ENCODE measurements at regions of chr3 and their contacts with region 1.

Region 1: DNA sequence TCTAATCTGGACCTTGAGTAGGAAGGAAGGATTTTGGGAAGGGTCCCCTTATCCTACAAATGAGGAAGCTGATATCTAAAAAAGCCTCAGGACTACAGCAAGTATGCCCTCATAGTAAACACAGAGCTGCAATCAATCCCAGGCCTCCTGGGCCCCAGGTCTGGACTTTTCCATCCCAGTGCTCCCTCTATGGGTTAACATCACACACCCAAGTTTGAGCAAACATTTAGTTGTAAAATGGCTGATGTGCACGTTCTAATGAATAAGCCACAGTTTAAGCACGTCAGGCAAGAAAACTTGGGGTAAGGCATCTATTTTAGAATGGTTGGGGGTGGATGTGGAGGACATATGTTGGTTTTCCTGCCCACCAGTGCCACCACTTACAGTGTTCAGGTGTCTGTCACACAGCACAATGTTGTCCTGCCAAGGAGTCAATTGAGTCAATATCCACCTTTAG is 44.3 kb upstream of the UBE2E1 start:
- DNase-seq: peak; percentile 56 to 63
- H3K4me3 ChIP-seq: no peak overlapping the region
- H3K4me3 Mint-ChIP-seq: no peak overlapping the region
- H3K27ac Mint-ChIP-seq: no peak overlapping the region
- H3K4me1 ChIP-seq: no peaks in the 10 kb centered on the region
- H3K4me1 Mint-ChIP-seq: no peaks in the 10 kb centered on the region
- H3K27me3 ChIP-seq: no peaks in the 10 kb centered on the region
- H3K27me3 Mint-ChIP-seq: no peaks in the 10 kb centered on the region
- CTCF ChIP-seq: peak in 1 of 2 experiments; percentile 55

Region 2: GRCh38 chr3:23519314-23520208 is 241.9 kb before region 1 on chr3:
- CTCF ChIA-PET with region 1: no interaction called
- POLR2A ChIA-PET with region 1: no interaction called
- intact Hi-C with region 1: loop called (anchors 10 kb)
- DNase-seq: no peak
- H3K4me3 ChIP-seq: no peak overlapping the region
- H3K4me3 Mint-ChIP-seq: no peak overlapping the region
- H3K27ac Mint-ChIP-seq: no peak overlapping the region
- H3K4me1 ChIP-seq: peaks cover 6% of the 10 kb centered on the region; the same call in 1 of the 2 replicates
- H3K4me1 Mint-ChIP-seq: no peaks in the 10 kb centered on the region
- H3K27me3 ChIP-seq: no peaks in the 10 kb centered on the region
- H3K27me3 Mint-ChIP-seq: no peaks in the 10 kb centered on the region
- CTCF ChIP-seq: no peak

Region 3: GRCh38 chr3:23696842-23697241 is 64.6 kb before region 1 on chr3:
- CTCF ChIA-PET with region 1: no interaction called
- POLR2A ChIA-PET with region 1: no interaction called
- intact Hi-C with region 1: no loop called
- DNase-seq: no peak
- H3K4me3 ChIP-seq: no peak overlapping the region
- H3K4me3 Mint-ChIP-seq: no peak overlapping the region
- H3K27ac Mint-ChIP-seq: no peak overlapping the region
- H3K4me1 ChIP-seq: peaks cover 3% of the 10 kb centered on the region; the same call in 1 of the 2 replicates
- H3K4me1 Mint-ChIP-seq: peaks cover 1% of the 10 kb centered on the region
- H3K27me3 ChIP-seq: no peaks in the 10 kb centered on the region
- H3K27me3 Mint-ChIP-seq: no peaks in the 10 kb centered on the region
- CTCF ChIP-seq: no peak

Region 4: GRCh38 chr3:23712656-23713559 is 48.6 kb before region 1 on chr3:
- CTCF ChIA-PET with region 1: no interaction called
- POLR2A ChIA-PET with region 1: no interaction called
- intact Hi-C with region 1: loop called (anchors 1 kb)
- DNase-seq: peak; percentile 60 to 68
- H3K4me3 ChIP-seq: no peak overlapping the region
- H3K4me3 Mint-ChIP-seq: no peak overlapping the region
- H3K27ac Mint-ChIP-seq: no peak overlapping the region
- H3K4me1 ChIP-seq: peaks cover 5% of the 10 kb centered on the region; the same call in 1 of the 2 replicates
- H3K4me1 Mint-ChIP-seq: peaks cover 17% of the 10 kb centered on the region
- H3K27me3 ChIP-seq: no peaks in the 10 kb centered on the region
- H3K27me3 Mint-ChIP-seq: no peaks in the 10 kb centered on the region
- CTCF ChIP-seq: peak in 1 of 2 experiments; percentile 41